ENCODE measurements at regions of chr11 and their contacts with region 1.

Region 1: DNA sequence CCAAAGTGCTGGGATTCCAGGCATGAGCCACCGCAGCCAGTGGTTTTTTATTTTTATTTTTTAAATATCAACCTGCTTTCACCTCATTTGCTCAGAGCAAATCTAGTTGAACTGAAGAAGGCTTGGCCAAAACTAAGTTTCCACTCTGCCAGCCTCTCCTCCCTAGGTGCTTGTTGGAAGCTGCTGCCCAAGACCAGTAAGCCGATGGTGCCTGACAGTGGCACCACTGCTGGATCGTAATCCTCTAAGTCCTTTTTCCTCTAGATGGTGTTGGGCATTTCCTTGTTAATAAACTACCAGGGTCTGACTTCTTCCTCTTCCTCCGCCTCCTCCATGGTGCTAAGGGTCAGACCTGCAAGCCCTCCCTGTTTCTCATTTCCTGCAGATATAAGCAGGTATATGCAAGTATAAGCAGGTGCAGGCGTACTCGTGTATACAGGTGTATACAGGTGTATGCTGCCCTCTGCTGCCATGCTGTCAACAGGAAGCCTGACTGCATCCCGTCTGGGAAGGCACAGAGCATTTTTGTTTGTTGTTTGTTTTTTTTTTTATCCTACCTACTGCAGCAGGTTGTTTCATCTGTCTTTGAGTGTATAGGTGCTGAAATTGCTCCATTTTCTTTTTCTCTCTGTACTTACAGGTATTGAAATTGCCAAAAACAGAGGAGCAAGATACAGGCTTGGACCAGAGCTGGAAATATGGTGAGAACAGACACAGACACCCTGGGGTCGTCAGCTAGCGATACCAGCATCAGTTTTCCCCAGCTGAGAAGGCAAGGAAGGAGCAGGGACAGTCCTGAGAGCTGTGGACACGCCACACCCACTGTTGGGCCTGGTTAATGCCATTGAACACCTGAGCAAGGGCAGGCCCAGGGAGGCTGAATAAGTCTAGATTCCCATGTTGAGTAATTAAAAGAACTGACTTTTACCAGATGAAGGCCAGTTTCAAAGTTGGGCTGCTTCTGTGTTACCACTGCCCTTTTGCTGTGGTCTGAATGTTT is 1.8 kb downstream of the NADSYN1 start:
- DNase-seq: no peak
- ATAC-seq: no peak
- H3K4me3 Mint-ChIP-seq: peak overlapping the region; percentile 89
- H3K27ac Mint-ChIP-seq: no peak overlapping the region
- H3K4me1 Mint-ChIP-seq: peaks cover 40% of the 10 kb centered on the region
- H3K27me3 Mint-ChIP-seq: no peaks in the 10 kb centered on the region
- CTCF ChIP-seq: no peak

Region 2: DNA sequence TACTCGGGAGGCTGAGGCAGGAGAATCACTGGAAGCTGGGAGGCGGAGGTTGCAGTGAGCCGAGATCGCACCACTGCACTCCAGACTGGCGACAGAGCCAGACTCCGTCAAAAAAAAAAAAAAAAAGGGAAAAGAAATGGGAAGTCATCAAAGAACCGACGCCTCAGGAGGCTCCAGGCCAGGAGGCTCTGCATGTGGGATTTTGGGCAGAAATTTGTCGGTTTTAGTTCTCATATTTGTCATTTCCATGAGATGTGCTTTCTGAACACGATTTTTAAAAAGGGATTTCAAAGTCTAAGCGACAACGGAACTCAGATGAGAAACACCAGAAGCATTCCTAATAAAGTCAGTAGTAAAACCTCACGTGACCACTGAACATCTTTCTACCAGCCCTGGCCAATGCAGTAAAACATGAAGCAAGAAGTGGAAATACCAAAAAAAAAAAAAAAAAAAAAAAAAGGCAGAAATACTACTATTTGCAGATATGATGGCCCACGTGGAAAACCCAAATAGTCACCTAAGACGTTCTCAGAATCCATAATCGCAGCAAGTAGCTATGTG is 1778.9 kb before region 1 on chr11:
- CTCF ChIA-PET with region 1: no interaction called
- POLR2A ChIA-PET with region 1: interaction called, 17 read pairs
- intact Hi-C with region 1: loop called (anchors 10 kb)
- DNase-seq: no peak
- ATAC-seq: no peak
- H3K4me3 Mint-ChIP-seq: peak overlapping the region; percentile 95
- H3K27ac Mint-ChIP-seq: no peak overlapping the region
- H3K4me1 Mint-ChIP-seq: peaks cover 25% of the 10 kb centered on the region
- H3K27me3 Mint-ChIP-seq: peaks cover 3% of the 10 kb centered on the region
- CTCF ChIP-seq: no peak

Region 3: DNA sequence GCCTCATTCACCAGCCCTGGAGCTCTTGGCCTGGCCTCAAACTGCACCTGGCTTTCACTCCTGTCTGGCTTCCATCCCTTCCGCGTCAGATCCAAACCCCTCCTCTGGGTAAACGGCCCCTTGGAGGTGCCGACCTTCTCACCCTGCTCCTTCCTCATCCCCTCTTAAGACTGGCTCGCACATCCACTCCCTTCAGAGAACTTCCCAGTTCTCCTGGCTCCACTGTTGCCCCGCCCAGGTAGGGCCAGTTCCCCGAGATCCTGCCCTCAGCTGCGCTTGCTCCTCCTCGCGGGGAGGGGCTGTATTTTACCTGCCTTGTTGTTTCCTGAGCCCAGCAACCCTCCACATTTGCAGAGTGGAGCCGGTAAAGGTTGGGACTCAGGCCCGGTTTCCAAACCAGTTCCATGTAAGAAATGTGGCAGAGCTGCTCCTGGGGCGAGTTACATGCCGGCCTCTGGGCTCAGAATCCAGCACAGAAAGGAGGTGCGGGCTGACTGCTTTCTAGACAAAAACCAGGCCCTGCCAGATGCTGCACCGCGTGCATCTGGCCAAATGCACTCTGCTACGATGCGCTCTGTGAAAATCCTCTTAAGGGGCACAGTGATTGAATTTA is 188.4 kb before region 1 on chr11:
- CTCF ChIA-PET with region 1: no interaction called
- POLR2A ChIA-PET with region 1: no interaction called
- intact Hi-C with region 1: no loop called
- DNase-seq: no peak
- ATAC-seq: no peak
- H3K4me3 Mint-ChIP-seq: no peak overlapping the region
- H3K27ac Mint-ChIP-seq: no peak overlapping the region
- H3K4me1 Mint-ChIP-seq: no peaks in the 10 kb centered on the region
- H3K27me3 Mint-ChIP-seq: peaks cover 15% of the 10 kb centered on the region
- CTCF ChIP-seq: no peak

Region 4: DNA sequence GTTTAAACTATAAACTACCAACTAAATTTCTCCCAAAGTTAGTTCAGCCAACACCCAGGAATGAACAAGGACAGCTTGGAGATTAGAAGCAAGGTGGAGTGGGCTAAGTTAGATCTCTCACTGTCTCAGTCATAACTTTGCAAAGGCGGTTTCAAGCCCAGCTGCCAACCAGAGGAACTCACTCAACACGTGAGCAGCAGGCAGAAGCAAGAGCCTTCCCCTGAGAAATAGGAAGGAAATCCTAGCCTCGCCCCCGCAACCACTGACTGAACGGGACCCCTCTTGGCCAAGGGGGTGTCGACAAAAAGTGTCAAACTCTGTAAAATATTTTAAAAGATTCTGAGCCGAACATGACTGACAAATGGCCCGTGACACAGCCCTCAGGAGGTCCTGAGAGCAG is 89.1 kb after region 1 on chr11:
- CTCF ChIA-PET with region 1: no interaction called
- POLR2A ChIA-PET with region 1: no interaction called
- intact Hi-C with region 1: no loop called
- DNase-seq: no peak
- ATAC-seq: no peak
- H3K4me3 Mint-ChIP-seq: peak overlapping the region; percentile 44
- H3K27ac Mint-ChIP-seq: no peak overlapping the region
- H3K4me1 Mint-ChIP-seq: peaks cover 18% of the 10 kb centered on the region
- H3K27me3 Mint-ChIP-seq: peaks cover 18% of the 10 kb centered on the region
- CTCF ChIP-seq: no peak

Measured in activated B cell treated with CpG ODN at 0.5 μM for 24 hours (primary cell).